Panc1 (cell line): ENCODE measurements at regions of chr11 and their contacts with region 1.

Region 1: DNA sequence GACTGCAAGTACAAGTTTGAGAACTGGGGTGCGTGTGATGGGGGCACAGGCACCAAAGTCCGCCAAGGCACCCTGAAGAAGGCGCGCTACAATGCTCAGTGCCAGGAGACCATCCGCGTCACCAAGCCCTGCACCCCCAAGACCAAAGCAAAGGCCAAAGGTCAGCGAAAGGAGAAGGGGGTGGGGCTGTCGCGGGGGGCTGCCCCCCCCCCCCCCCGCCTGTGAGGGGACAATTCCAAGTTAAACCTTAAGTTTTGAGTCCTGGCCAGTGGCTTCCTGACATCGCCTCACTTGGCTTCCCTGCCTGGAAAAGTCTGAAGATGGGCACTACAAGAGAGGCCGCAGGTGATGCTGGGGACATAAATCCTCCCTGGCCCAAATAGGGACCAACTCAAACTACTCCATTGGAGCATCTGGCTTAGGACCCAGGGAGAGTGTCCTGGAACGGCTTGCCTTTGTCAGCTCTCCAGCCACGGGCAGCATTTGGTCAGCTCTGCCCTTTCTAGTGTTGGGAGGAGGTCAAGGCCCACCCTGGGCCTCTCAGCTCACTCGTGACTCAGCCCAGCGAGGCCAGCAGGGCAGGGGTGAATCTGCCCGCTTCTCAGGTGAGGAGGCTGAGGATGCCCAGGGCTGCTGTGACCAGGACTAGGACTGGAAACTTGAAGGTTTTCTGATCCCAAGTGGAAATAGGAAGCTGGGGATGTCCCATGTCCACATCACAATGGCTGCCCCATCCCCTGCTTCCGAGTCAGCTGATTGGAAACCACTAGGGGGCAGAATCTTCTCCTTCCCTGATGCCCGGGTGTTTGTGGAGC is 1.3 kb downstream of the MDK start:
- DNase-seq: no peak
- ATAC-seq: peak; percentile 13; the same call in 1 of the 2 replicates
- H3K4me3 ChIP-seq: peak overlapping the region; percentile 51 to 59
- H3K27ac ChIP-seq: no peak overlapping the region; the same call in 1 of the 2 replicates
- H3K4me1 ChIP-seq: peaks cover 16% of the 10 kb centered on the region
- H3K27me3 ChIP-seq: no peaks in the 10 kb centered on the region
- CTCF ChIP-seq: peak; percentile 87

Region 2: GRCh38 chr11:46322759-46323158 is 60.0 kb before region 1 on chr11:
- CTCF ChIA-PET with region 1: interaction called, 10 read pairs
- POLR2A ChIA-PET with region 1: no interaction called
- in situ Hi-C with region 1: no loop called
- intact Hi-C with region 1: no loop called
- DNase-seq: no peak
- ATAC-seq: 0 out of 2 replicates have a peak, but pooled peaks have one; percentile 17
- H3K4me3 ChIP-seq: no peak overlapping the region
- H3K27ac ChIP-seq: no peak overlapping the region
- H3K4me1 ChIP-seq: no peaks in the 10 kb centered on the region
- H3K27me3 ChIP-seq: no peaks in the 10 kb centered on the region
- CTCF ChIP-seq: no peak